PC-9 (cell line): ENCODE measurements at regions of chr2 and their contacts with region 1.

Region 1: GRCh38 chr2:169109502-169110409 is 40.4 kb downstream of the DHRS9 start:
- DNase-seq: peak; percentile 54 to 55
- H3K4me3 ChIP-seq: no peak overlapping the region
- H3K27ac ChIP-seq: no peak overlapping the region
- H3K4me1 ChIP-seq: peaks cover 9% of the 10 kb centered on the region; the same call in 1 of the 2 replicates
- H3K27me3 ChIP-seq: no peaks in the 10 kb centered on the region
- CTCF ChIP-seq: peak; percentile 85

Region 2: DNA sequence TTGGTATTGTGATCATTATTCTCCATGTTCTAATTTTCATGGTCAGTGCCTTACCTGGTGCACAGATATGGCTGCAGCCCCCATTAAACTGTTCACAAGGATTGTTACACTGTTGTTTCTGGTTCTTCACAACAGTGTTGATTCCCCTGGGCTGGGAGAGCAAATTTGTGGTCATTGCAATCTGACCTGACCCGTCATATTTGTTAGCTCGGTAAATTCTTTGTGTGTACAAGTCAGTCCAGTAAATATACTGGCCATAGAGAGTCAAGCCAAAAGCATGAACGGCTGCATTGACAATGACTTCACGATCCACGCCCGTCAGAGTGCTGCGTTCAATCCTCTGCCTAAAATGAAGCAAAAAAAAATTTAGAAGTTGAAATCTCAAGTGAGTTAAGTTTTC is 94.2 kb after region 1 on chr2:
- CTCF ChIA-PET with region 1: no interaction called
- POLR2A ChIA-PET with region 1: no interaction called
- intact Hi-C with region 1: no loop called
- DNase-seq: no peak
- H3K4me3 ChIP-seq: no peak overlapping the region
- H3K27ac ChIP-seq: no peak overlapping the region
- H3K4me1 ChIP-seq: no peaks in the 10 kb centered on the region
- H3K27me3 ChIP-seq: no peaks in the 10 kb centered on the region; the same call in 1 of the 2 replicates
- CTCF ChIP-seq: no peak

Region 3: DNA sequence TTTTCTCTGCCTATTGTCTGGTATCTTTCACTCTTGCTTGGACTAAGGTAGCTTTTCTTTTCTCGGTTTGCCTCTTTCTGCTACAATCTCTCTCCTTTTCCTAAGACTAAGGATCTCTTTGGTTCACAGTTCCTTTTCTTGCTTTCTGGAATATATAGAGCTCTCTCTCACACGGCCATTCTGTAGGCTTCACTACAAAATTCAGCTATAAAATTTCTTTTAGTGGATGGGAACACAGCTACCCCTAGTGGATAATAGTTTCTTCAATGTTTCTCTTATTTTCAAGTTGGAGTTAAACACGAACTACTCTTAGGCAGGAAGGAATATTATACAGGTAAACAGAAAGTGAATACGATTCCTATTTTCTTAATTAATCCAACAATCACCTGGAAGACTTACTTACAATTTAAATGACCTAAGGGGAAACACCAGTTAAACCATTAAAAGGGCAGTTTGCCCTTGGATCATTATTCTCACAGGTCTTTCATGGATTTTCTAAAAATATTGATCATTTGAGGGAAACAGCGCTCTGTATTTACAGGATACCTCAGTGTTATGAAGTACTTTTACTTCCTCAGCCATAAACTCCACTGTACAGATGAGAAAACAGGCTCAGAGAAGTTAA is 112.1 kb after region 1 on chr2:
- CTCF ChIA-PET with region 1: no interaction called
- POLR2A ChIA-PET with region 1: no interaction called
- intact Hi-C with region 1: loop called (anchors 10 kb)
- DNase-seq: no peak
- H3K4me3 ChIP-seq: no peak overlapping the region
- H3K27ac ChIP-seq: no peak overlapping the region
- H3K4me1 ChIP-seq: no peaks in the 10 kb centered on the region
- H3K27me3 ChIP-seq: no peaks in the 10 kb centered on the region
- CTCF ChIP-seq: peak; percentile 63

Region 4: DNA sequence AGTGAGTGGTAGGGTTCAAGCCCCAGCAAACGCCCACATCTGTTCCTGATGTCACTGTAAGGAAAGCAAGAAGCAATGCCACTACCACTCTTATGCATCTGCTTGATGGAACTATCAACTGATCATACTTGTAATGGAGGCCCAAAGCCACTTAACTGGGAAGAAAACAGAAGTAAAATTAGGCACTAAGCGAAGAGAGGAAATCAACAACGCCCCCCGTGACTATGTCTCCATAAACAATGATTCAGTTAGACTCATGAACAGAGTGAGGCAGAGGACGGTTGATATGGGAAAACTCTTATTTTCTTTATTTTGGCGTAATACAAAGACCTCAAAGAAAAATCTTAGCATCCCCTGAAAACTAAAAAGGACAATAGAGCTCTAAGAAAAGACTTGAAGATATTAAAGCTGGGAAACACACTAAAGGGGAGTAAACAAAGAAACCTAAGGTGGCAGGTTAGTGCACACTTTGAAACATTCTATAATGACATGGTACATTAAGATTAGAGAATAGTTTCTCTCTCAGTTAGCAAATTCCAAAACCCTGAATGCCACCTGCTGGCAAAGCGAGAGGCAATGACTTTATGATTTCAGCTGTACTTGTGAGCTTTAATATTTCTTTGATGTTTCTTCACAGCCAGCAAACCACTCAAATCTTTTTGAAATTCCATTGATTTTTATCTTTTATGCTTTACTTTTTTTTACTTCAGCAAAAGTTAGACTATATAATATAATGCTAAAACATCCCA is 166.1 kb after region 1 on chr2:
- CTCF ChIA-PET with region 1: interaction called, 4 read pairs
- POLR2A ChIA-PET with region 1: no interaction called
- intact Hi-C with region 1: loop called (anchors 2 kb)
- DNase-seq: peak in 1 of 2 experiments; percentile 1
- H3K4me3 ChIP-seq: no peak overlapping the region
- H3K27ac ChIP-seq: no peak overlapping the region
- H3K4me1 ChIP-seq: no peaks in the 10 kb centered on the region
- H3K27me3 ChIP-seq: no peaks in the 10 kb centered on the region
- CTCF ChIP-seq: peak; percentile 47; the same call in 1 of the 2 replicates

Region 5: GRCh38 chr2:169397697-169398096 is 287.9 kb after region 1 on chr2:
- CTCF ChIA-PET with region 1: no interaction called
- POLR2A ChIA-PET with region 1: no interaction called
- intact Hi-C with region 1: loop called (anchors 5 kb)
- DNase-seq: no peak
- H3K4me3 ChIP-seq: no peak overlapping the region
- H3K27ac ChIP-seq: no peak overlapping the region
- H3K4me1 ChIP-seq: no peaks in the 10 kb centered on the region
- H3K27me3 ChIP-seq: no peaks in the 10 kb centered on the region
- CTCF ChIP-seq: peak; percentile 35; the same call in 1 of the 2 replicates

Region 6: DNA sequence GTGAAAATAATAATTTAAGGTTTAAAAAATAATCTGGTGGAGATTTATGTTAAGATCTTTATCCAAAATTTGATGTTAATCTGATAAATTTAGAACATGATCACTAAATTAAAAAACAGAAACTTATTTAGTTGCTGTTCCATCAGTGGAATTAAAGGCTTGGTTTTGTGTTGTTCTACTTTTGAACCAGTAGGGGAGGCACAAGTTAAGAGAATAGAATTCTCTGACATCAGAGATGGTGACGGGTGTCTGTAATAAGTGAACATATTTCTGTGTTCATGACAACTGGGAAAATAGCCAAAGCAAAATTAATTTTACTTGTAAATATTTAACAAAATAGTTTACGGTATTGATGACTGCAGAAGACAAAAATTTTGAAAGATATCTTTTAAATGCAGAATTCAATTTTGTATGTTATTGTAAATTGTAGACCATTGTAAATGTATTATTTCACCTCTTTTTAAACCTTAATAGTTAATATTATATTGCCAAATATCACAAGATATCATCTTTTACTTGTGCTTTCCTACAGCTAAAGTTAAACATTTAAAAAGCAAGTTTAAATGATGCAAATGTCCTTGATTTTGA is 823.5 kb after region 1 on chr2:
- CTCF ChIA-PET with region 1: interaction called, 4 read pairs
- POLR2A ChIA-PET with region 1: no interaction called
- intact Hi-C with region 1: loop called (anchors 5 kb)
- DNase-seq: no peak
- H3K4me3 ChIP-seq: no peak overlapping the region
- H3K27ac ChIP-seq: no peak overlapping the region
- H3K4me1 ChIP-seq: no peaks in the 10 kb centered on the region
- H3K27me3 ChIP-seq: no peaks in the 10 kb centered on the region
- CTCF ChIP-seq: peak; percentile 72